ENCODE measurements at regions of chr2 and their contacts with region 1.

Region 1: GRCh38 chr2:84302513-84303412 is 156.3 kb downstream of the SUCLG1 start:
- DNase-seq: peak in 2 of 3 donors; percentile 43 to 75
- ATAC-seq: peak; percentile 99
- H3K4me3 ChIP-seq: no peak overlapping the region
- H3K4me1 ChIP-seq: no peaks in the 10 kb centered on the region
- CTCF ChIP-seq: peak; percentile 62

Region 2: DNA sequence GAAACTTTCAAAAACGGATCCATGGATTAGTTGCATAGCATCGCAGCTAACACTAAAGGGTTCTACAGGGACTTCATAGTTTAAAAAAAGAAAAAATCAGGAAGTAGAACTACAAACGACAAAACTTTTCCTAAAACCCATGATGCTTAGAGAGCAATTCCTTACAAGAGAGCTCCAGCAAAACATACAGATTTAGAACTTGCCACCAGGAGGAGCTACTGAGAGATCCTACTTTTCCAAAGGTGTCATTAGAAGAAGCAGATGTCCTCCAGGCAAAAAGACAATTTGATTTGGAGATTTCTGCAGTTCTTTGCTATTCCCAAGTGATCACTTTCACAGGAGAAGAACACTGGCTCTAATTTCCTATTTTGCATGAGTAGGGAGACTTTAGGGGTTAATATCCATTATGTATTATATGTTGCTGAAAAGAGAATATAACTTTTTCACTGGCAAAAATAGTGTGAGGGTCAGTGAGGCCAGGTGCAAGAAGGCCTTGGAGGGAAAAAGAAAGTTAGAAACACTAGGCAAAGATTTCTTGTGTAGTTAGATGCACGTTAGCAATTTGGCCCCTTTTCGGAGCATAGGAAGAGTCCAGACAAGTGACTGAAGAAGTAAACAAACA is 279.8 kb before region 1 on chr2:
- intact Hi-C with region 1: loop called in 1 of 2 experiments (anchors 5 kb)
- DNase-seq: peak in 1 of 3 donors; percentile 83
- ATAC-seq: peak; percentile 58
- H3K4me3 ChIP-seq: no peak overlapping the region
- H3K4me1 ChIP-seq: no peaks in the 10 kb centered on the region
- CTCF ChIP-seq: peak; percentile 21

Region 3: DNA sequence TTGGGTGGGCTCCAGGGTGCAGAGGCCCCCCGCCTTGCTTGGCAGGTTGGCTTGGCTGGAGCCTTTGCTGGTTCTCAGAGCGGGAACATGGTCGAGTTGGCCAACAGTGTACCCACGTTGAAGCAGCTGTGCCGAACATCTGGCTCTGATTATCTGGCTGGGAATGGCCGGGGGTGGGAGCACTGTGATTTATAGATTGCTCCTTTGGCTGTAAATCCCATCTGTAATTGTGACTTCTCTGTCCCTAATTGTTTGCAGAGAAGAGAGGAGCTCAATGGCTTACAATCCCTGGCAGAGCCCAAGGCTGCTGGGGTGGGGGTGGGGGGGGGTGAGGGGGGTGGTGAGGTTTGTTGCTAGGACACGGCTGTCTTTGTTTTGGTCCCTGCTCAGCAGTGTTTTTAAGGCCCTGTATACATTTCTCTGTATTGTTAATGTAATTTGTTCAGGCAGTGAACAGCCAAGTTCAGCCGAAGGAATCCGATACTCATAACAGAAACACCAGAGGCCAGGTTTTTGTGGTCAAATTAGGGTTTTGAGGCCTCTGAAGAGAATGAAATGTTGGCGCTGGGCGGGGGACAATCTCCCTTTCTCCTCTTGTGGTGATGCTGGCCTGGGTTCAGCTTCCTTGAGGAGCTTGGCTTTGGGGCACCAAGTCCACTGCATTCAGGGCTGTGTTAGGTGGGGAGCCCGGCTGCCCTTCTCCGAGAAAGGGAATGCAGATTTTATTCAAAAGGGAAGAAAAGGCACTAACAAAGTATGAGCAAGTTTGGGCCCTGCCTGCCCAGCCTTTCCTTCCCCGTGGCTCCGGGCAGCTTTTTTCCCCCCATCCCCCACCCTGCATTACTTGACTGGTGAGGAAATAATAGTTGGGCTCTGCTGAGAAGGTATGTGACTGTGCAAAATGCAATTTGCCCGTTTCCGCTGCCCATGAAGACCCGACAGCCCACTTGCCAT is 913.0 kb after region 1 on chr2:
- intact Hi-C with region 1: no loop called
- DNase-seq: no peak
- ATAC-seq: peak; percentile 45
- H3K4me3 ChIP-seq: no peak overlapping the region
- H3K4me1 ChIP-seq: peaks cover 6% of the 10 kb centered on the region
- CTCF ChIP-seq: no peak